Heart right ventricle (tissue), 16 donors: ENCODE measurements at regions of chr2 and their contacts with region 1.

Region 1: DNA sequence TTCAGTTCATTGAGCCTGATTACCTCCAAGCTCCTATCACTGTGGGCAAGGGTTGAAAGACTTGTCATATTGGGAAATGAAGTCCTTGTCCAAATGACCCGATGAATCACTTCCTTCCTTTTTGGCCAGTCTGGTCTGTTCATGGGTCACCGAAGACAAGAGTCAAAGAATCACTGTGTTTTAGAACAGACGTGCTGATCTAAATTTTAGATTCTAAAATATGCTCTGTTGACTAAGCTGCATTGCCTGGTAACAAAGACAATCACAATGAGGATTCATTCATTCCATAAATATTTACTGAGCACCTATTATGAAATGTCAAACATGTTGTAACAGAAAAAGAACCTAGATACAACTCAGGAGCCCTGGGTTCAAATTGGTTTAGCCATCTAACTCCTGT is 99.4 kb upstream of the RND3 start:
- DNase-seq: no peak
- ATAC-seq: peak in 5 of 8 donors; percentile 20 to 93 (median 42)
- H3K4me3 ChIP-seq: no peak overlapping the region
- H3K27ac ChIP-seq: no peak overlapping the region
- H3K4me1 ChIP-seq: peaks cover 0 to 14% (median 6%) of the 10 kb centered on the region in 9 donors
- H3K27me3 ChIP-seq: no peaks in the 10 kb centered on the region
- CTCF ChIP-seq: no peak

Region 2: GRCh38 chr2:150517951-150518680 is 68.7 kb before region 1 on chr2:
- intact Hi-C with region 1: loop called in 1 of 10 experiments (anchors 10 kb)
- DNase-seq: no peak
- ATAC-seq: peak in 2 of 8 donors; percentile 58 to 62
- H3K4me3 ChIP-seq: no peak overlapping the region
- H3K27ac ChIP-seq: no peak overlapping the region
- H3K4me1 ChIP-seq: peaks cover 0 to 10% (median 0%) of the 10 kb centered on the region in 9 donors
- H3K27me3 ChIP-seq: no peaks in the 10 kb centered on the region
- CTCF ChIP-seq: no peak